ENCODE measurements at regions of chr2 and their contacts with region 1.

Region 1: DNA sequence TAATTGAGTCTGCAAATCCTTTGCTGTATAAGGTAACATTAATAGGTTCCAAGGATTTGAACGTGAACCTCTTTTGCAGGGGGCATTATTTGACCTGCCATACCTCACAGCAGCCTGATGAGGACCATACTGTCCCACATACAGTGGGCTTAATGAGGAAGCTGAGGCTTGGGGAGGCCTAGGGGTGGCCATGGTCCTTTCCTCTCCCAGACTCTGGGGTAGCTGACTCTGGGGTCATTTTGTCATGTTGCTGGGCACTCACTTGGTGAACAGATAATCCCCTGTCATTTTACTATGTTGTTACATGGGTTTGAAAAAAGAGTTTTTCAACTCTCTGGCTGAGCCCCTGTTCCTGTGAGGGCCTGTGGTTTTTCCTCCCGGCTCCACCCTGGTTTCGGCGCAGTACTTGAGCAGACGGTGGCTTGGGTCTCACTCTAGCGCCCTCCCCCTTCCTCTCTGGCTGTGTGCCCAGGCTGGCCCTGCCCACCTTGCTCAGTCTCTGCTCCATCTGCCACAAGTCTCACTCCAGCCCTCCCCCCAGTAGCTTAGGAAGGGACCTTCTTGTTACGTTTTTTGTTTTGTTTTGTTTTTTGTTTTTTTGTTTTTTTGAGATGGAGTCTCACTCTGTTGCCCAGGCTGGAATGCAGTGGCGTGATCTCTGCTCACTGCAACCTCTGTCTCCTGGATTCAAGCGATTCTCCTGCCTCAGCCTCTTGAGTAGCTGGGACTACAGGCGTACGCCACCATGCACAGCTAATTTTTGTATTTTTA is 21.0 kb downstream of the INPP4A start:
- DNase-seq: peak; percentile 79
- H3K4me3 Mint-ChIP-seq: peak overlapping the region; percentile 68
- H3K27ac Mint-ChIP-seq: peak overlapping the region; percentile 95
- H3K4me1 Mint-ChIP-seq: peaks cover 85% of the 10 kb centered on the region
- H3K27me3 Mint-ChIP-seq: no peaks in the 10 kb centered on the region

Region 2: DNA sequence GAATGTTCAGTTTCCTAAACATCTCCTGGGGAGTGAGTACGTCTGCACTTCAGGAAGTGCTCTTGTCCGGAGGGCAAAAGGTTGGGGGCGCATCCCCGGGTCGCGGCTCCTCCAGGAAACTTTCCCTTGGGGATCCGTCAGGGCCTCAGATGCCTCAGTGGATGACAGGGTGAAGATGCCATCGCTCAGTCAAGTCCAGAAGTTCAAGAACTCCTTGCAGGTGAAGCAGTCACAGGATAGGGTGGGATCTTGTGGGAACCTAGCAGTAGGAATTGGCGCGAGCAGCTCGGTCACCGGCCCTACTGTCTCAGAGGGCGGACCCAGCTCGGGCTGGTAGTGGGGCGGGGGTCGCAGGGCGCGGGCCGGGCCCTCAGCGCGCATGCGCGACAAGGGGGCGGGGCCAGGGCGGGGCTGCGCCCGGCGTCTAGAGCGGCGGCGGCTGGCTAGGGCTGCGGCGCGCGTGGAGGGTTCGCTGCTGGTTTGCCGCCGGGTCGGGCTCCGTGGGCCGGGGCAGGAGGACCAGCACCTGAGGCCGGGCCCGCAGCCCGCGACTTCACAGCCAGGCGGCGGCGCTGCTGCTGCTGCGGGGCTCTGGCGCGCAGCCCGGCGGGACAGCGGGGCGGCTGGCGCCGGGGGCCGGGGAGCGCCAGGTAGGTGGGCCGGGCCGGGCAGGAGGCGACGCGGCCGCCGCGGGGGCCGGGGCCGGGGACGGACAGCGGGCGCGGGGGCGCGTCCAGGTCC is 21.0 kb before region 1 on chr2 and contains the start of gene INPP4A:
- CTCF ChIA-PET with region 1: interaction called, 20 read pairs
- POLR2A ChIA-PET with region 1: interaction called, 22 read pairs
- intact Hi-C with region 1: no loop called
- DNase-seq: peak; percentile 84
- H3K4me3 Mint-ChIP-seq: peak within 1 kb of the TSS; percentile 89
- H3K27ac Mint-ChIP-seq: peak within 1 kb of the TSS; percentile 86
- H3K4me1 Mint-ChIP-seq: peaks cover 43% of the 10 kb centered on the region
- H3K27me3 Mint-ChIP-seq: no peaks in the 10 kb centered on the region
- total RNA-seq, gene INPP4A: 40.7 to 42.0 TPM

Region 3: DNA sequence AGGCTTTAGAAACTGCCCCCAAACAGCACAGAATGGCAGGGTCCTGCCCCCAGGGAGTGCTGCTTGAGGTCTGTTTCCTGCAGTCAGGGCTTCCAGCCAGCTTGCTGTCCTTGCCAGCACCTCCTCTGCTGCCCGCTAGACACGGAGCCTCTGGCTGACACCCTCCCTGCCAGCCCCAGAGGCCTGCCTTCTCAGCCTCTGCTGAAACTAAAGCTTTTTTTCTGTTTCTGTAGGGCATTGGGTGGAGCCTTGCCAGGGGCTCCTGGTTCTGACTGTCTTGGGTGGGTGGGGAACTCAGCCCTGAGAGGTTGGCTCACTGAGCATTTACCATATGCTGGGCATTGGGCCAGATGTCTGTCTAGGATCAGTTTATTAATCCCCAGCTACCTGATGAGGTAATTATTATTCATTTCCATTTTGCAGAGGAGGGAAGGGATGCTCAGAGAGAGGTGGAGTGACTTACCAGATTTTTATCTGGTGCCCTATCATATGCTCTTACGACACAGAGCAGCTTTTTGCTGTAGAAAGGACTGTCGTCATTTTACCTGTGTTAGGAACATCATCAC is 14.4 kb after region 1 on chr2:
- CTCF ChIA-PET with region 1: interaction called, 9 read pairs
- POLR2A ChIA-PET with region 1: interaction called, 25 read pairs
- intact Hi-C with region 1: loop called (anchors 1 kb)
- DNase-seq: peak; percentile 74
- H3K4me3 Mint-ChIP-seq: peak overlapping the region; percentile 21
- H3K27ac Mint-ChIP-seq: peak overlapping the region; percentile 81
- H3K4me1 Mint-ChIP-seq: peaks cover 96% of the 10 kb centered on the region
- H3K27me3 Mint-ChIP-seq: no peaks in the 10 kb centered on the region

Region 4: DNA sequence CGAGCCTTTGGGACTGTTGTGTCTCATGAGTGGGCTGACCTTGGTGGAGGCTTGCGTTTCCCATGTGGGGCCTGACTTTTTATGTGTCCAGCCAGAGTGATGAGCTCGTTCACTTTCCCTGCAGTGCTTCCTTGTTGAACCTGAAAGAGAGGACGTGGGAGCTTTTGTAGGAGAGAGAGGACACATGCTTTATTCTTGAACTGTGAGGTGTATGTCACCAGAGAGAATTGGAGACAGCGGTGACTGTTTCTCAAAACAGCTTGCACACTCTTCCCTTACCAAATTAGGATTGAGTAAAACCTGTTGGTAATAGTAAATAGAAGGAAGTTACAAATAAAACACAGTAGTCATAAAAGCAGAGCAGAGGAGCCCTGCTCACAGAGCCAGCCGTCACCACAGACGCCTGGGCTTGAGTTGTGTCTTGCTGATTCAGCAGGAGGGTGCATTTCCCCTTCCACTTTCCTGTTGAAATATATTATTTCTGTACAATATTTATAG is 39.7 kb after region 1 on chr2:
- CTCF ChIA-PET with region 1: no interaction called
- POLR2A ChIA-PET with region 1: interaction called, 3 read pairs
- intact Hi-C with region 1: loop called (anchors 2 kb)
- DNase-seq: peak; percentile 54
- H3K4me3 Mint-ChIP-seq: no peak overlapping the region
- H3K27ac Mint-ChIP-seq: no peak overlapping the region
- H3K4me1 Mint-ChIP-seq: peaks cover 89% of the 10 kb centered on the region
- H3K27me3 Mint-ChIP-seq: no peaks in the 10 kb centered on the region